ENCODE measurements at regions of chr10 and their contacts with region 1.

Region 1: GRCh38 chr10:88553116-88553752 is 29.9 kb downstream of the RNLS start:
- DNase-seq: peak; percentile 54
- ATAC-seq: peak; percentile 97
- H3K4me3 ChIP-seq: no peak overlapping the region
- H3K27ac ChIP-seq: no peak overlapping the region
- H3K4me1 ChIP-seq: peaks cover 0 to 7% of the 10 kb centered on the region in 2 experiments; a peak in 2 of 4 replicates
- H3K27me3 ChIP-seq: no peaks in the 10 kb centered on the region
- CTCF ChIP-seq: peak; percentile 79 to 85 (median 84)
- POLR2A ChIP-seq: no peak
- RAD21 ChIP-seq: peak; percentile 91

Region 2: GRCh38 chr10:87850742-87851205 is 702.5 kb before region 1 on chr10:
- CTCF ChIA-PET with region 1: no interaction called
- POLR2A ChIA-PET with region 1: no interaction called
- RAD21 ChIA-PET with region 1: no interaction called
- intact Hi-C with region 1: loop called (anchors 1 kb)
- DNase-seq: no peak
- ATAC-seq: peak; percentile 88
- H3K4me3 ChIP-seq: no peak overlapping the region
- H3K27ac ChIP-seq: no peak overlapping the region
- H3K4me1 ChIP-seq: peaks cover 3 to 23% of the 10 kb centered on the region in 2 experiments; a peak in 3 of 4 replicates
- H3K27me3 ChIP-seq: no peaks in the 10 kb centered on the region
- CTCF ChIP-seq: peak; percentile 59 to 70 (median 67); a peak in 5 of 6 replicates
- POLR2A ChIP-seq: no peak
- RAD21 ChIP-seq: peak; percentile 88

Region 3: DNA sequence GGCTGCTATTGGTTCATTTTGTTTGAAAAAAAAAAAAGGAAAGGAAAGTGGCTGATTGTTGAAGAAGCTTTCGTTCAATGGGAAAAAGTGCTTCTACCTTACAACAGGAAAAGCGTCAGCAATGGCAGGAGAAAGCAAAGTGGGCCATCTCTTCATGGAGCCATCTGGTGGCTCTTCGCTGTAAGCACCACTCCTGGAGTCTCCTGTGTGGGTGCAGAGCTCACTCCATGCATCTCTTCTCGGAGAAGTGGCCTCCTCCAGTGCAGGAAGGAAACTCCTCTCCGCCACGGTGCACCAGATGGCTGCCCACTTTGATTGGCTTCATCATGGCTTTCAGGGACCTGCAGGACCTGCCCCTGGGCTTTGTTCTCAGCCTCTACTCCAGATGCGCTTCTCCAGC is 438.9 kb before region 1 on chr10:
- CTCF ChIA-PET with region 1: interaction called, 4 read pairs
- POLR2A ChIA-PET with region 1: no interaction called
- RAD21 ChIA-PET with region 1: interaction called in 1 of 2 experiments, 4 read pairs
- intact Hi-C with region 1: loop called (anchors 5 kb)
- DNase-seq: peak; percentile 35
- ATAC-seq: peak; percentile 69
- H3K4me3 ChIP-seq: no peak overlapping the region
- H3K27ac ChIP-seq: no peak overlapping the region
- H3K4me1 ChIP-seq: peaks cover 10 to 17% of the 10 kb centered on the region in 2 experiments
- H3K27me3 ChIP-seq: no peaks in the 10 kb centered on the region
- CTCF ChIP-seq: peak; percentile 61 to 69 (median 63); a peak in 5 of 6 replicates
- POLR2A ChIP-seq: no peak
- RAD21 ChIP-seq: peak; percentile 74

Region 4: DNA sequence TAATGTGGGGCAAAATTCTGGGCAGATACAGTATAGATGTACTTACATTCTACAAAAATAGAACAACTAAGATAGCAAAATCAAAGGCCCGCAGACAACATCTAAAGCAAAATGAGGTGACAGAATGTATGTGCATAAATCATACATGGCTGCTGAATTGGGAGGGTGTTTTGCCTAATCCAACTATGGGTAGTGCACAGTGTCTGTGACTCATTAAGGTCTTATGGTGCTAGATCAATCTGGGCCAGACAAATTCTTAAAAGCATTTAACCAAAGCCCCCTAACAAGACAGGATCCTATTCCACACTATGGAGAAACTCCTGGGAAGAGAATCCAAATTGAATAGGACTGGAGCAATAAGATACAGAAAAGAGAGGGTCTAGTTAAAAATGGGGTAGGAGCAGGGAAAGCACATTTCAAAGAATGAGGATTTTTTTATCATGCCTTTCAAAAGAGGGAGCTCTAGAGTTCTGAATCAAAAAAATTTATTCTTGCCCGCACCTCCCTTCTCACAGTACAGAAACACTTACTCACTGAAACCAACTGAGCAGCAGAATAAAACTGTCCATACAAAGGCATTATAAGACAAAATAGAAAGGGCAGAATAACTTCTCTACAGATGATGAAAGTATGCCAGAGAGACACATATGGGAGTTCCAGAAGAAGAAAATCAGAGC is 151.4 kb before region 1 on chr10:
- CTCF ChIA-PET with region 1: no interaction called
- POLR2A ChIA-PET with region 1: no interaction called
- RAD21 ChIA-PET with region 1: interaction called in 1 of 2 experiments, 3 read pairs
- intact Hi-C with region 1: loop called (anchors 1 kb)
- DNase-seq: no peak
- ATAC-seq: peak; percentile 92
- H3K4me3 ChIP-seq: no peak overlapping the region
- H3K27ac ChIP-seq: no peak overlapping the region
- H3K4me1 ChIP-seq: peaks cover 0 to 10% of the 10 kb centered on the region in 2 experiments; a peak in 2 of 4 replicates
- H3K27me3 ChIP-seq: no peaks in the 10 kb centered on the region
- CTCF ChIP-seq: peak in 2 of 3 experiments; percentile 36 to 49; a peak in 3 of 6 replicates
- POLR2A ChIP-seq: no peak
- RAD21 ChIP-seq: peak; percentile 58

Region 5: GRCh38 chr10:88537322-88537721 is 15.9 kb before region 1 on chr10:
- CTCF ChIA-PET with region 1: no interaction called
- POLR2A ChIA-PET with region 1: no interaction called
- RAD21 ChIA-PET with region 1: no interaction called
- intact Hi-C with region 1: loop called (anchors 2 kb)
- DNase-seq: no peak
- ATAC-seq: no peak
- H3K4me3 ChIP-seq: no peak overlapping the region
- H3K27ac ChIP-seq: no peak overlapping the region
- H3K4me1 ChIP-seq: no peaks in the 10 kb centered on the region
- H3K27me3 ChIP-seq: no peaks in the 10 kb centered on the region
- CTCF ChIP-seq: no peak
- POLR2A ChIP-seq: no peak
- RAD21 ChIP-seq: no peak